Activated B cell treated with CpG ODN at 0.5 μM for 24 hours (primary cell): ENCODE measurements at regions of chr19 and their contacts with region 1.

Region 1: DNA sequence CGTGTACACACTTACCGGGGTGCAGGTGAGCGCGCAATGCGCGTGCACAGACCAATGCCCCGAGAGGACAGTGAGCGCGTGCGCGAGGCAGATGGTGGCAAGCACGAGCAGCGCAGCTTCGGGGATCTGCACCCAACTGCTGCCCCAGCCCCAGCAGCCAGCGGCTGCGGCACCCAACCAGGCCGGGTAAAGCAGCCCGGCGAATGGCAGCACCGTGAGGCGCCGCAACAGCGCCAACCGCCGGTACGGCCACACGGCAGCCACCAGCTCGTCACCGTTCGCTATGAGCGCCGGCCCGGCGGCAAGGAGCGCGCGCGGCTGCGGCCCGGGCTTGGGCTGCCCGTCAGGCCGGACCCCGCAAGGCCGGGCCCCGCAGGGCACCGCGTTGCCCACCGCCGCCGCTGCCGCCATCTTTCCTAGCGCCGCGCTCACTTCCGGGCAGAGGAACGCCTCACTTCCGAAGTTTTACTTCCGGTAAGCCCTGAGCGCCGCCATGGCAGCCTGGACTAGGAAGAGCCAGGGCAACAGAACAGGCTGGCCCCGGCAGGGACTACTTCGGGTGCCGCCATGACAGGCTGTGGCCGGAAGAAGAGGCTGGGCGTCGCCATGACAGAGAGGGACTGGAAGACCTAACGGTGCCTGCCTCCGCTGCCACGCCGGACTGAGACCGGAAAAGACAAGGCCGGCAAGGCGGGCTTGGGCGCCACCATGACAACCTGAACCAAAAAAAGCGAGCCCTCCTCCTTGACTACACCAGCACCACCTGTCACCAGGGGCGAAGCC is at the start of gene ATP13A1:
- DNase-seq: peak; percentile 90
- ATAC-seq: peak; percentile 78
- H3K4me3 Mint-ChIP-seq: peak within 1 kb of the TSS; percentile 92
- H3K27ac Mint-ChIP-seq: peak within 1 kb of the TSS; percentile 98
- H3K4me1 Mint-ChIP-seq: peaks cover 44% of the 10 kb centered on the region
- H3K27me3 Mint-ChIP-seq: no peaks in the 10 kb centered on the region
- CTCF ChIP-seq: no peak
- total RNA-seq, gene ATP13A1: 125 and 135 TPM in 2 replicates

Region 2: GRCh38 chr19:19385108-19385899 is 278.1 kb before region 1 on chr19:
- CTCF ChIA-PET with region 1: no interaction called
- POLR2A ChIA-PET with region 1: no interaction called
- intact Hi-C with region 1: loop called (anchors 1 kb)
- DNase-seq: peak; percentile 98
- ATAC-seq: peak; percentile 89
- H3K4me3 Mint-ChIP-seq: peak overlapping the region; percentile 87
- H3K27ac Mint-ChIP-seq: peak overlapping the region; percentile 83
- H3K4me1 Mint-ChIP-seq: peaks cover 43% of the 10 kb centered on the region
- H3K27me3 Mint-ChIP-seq: no peaks in the 10 kb centered on the region
- CTCF ChIP-seq: no peak

Region 3: DNA sequence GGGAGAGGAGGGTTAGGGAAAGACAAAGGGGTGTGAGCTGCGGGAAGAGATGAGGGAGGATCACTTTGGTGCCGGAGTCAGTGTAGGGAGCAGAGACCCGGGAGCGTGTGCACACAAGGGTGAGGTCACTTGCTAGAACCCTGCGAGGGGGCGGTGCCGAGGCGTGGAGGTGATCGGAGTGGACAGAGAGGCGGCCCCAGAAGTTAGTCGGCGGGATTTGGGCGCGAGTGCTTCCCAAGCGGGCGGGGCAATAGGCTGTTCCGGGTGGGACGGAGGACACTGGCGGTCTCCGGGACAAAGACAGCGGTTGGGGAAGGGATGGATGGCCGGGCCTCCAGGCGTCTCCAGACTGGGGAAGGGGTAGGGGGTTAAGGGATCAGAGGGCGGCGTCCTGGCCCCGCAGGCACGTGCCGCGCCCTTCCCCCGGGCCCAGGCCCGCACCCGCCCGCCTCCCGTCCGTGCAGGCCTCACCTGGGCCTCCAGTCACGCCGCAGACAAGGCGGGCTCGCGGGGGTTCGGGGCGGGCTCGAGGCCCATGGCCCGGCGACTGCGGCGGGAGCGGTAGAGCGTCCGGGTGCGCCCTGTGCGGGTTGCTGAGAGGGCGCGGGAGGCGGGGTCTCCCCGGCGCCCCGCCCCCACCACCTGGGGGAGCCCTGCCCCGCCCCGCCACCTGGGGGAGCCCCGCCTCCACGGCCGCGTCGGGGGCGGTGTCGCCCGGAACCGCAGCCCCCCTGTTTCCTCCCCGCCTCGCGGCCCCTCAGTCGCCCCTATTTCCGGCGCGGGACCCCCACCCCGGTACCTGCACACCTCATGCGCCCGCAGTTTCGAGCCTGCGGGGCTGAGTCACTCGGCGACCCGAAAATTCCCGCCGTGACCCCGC is 35.6 kb before region 1 on chr19 and contains the start of gene LPAR2:
- CTCF ChIA-PET with region 1: no interaction called
- POLR2A ChIA-PET with region 1: interaction called, 10 read pairs
- intact Hi-C with region 1: no loop called
- DNase-seq: peak; percentile 81
- ATAC-seq: peak; percentile 87
- H3K4me3 Mint-ChIP-seq: peak within 1 kb of the TSS; percentile 93
- H3K27ac Mint-ChIP-seq: peak within 1 kb of the TSS; percentile 92
- H3K4me1 Mint-ChIP-seq: peaks cover 24% of the 10 kb centered on the region
- H3K27me3 Mint-ChIP-seq: no peaks in the 10 kb centered on the region
- CTCF ChIP-seq: no peak
- total RNA-seq, gene LPAR2: 29.0 and 33.7 TPM in 2 replicates

Region 4: GRCh38 chr19:19732579-19733501 is 69.4 kb after region 1 on chr19 and contains the start of gene ZNF14:
- CTCF ChIA-PET with region 1: no interaction called
- POLR2A ChIA-PET with region 1: interaction called, 42 read pairs
- intact Hi-C with region 1: loop called (anchors 1 kb)
- DNase-seq: peak; percentile 79
- ATAC-seq: peak; percentile 99
- H3K4me3 Mint-ChIP-seq: peak within 1 kb of the TSS; percentile 99
- H3K27ac Mint-ChIP-seq: peak within 1 kb of the TSS; percentile 96
- H3K4me1 Mint-ChIP-seq: peaks cover 28% of the 10 kb centered on the region
- H3K27me3 Mint-ChIP-seq: no peaks in the 10 kb centered on the region
- CTCF ChIP-seq: no peak
- total RNA-seq, gene ZNF14: 11.8 and 13.4 TPM in 2 replicates

Region 5: DNA sequence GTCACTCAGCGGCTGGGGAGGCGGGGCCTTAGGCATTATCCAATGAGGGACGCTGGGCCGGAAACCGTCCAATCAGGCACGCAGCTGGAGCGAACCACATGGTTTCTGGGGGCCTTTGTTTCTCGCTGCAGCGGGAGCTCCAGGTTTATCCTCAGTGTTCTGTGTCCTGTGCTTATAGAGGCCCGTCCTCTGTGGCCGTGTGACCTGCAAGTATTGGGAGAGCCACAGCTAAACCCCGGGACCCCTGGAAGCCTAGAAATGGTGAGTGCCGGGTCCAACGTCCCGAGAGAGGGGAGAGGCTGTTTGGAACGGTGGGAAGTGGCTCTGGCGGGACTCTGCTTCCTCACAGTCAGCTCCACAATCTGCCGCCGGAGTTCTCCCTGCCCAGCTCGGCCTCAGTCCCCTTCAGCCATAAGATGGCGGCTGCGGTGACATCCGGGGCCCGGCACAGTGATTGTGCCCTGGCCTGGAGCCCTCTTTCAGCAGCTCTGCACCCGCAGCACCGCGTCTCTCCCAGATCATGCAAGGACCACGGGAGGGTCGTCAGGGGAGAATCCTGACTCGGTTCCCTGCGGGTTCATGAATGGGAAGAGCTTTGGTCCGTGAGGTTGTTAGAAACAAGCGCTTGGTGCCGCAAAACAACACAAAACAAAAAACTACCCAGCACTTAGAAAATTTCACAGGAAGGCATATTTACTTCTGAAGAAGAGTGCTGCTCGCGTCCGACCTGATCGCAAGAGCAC is 202.5 kb after region 1 on chr19 and contains the start of gene ZNF253:
- CTCF ChIA-PET with region 1: no interaction called
- POLR2A ChIA-PET with region 1: interaction called, 24 read pairs
- intact Hi-C with region 1: loop called (anchors 1 kb)
- DNase-seq: peak; percentile 82
- ATAC-seq: peak; percentile 90
- H3K4me3 Mint-ChIP-seq: peak within 1 kb of the TSS; percentile 100
- H3K27ac Mint-ChIP-seq: peak within 1 kb of the TSS; percentile 99
- H3K4me1 Mint-ChIP-seq: peaks cover 34% of the 10 kb centered on the region
- H3K27me3 Mint-ChIP-seq: no peaks in the 10 kb centered on the region
- CTCF ChIP-seq: no peak
- total RNA-seq, gene ZNF253: 24.7 and 26.3 TPM in 2 replicates

Region 6: DNA sequence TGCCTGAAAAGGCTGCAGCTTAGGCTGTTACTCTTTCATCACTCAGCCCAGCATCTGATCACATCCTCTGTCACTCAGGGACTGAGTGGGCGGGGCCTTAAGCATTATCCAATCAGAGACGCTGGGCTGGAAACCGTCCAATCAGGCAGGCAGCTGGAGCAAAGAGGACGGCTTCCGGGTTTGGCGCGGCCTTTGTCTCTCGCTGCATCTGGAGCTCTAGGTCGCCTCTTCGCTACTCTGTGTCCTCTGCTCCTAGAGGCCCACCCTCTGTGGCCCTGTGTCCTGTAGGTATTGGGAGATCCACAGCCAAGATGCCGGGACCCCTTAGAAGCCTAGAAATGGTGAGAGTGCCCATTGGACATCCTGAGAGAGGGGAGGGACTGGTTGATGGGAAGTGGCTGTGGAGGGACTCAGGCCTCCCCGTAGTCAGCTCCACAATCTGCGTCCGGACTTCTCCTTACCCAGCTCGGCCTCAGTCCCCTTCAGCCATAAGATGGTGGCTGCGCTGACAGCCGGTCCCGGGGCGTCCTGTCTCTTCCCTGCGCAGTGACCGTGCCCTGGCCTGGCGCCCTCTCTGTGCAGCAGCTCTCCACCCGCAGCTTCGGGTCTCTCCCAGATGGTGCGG is 503.7 kb after region 1 on chr19 and contains the start of gene ZNF486:
- CTCF ChIA-PET with region 1: no interaction called
- POLR2A ChIA-PET with region 1: interaction called, 3 read pairs
- intact Hi-C with region 1: loop called (anchors 2 kb)
- DNase-seq: peak; percentile 80
- ATAC-seq: peak; percentile 96
- H3K4me3 Mint-ChIP-seq: peak within 1 kb of the TSS; percentile 99
- H3K27ac Mint-ChIP-seq: peak within 1 kb of the TSS; percentile 97
- H3K4me1 Mint-ChIP-seq: peaks cover 59% of the 10 kb centered on the region
- H3K27me3 Mint-ChIP-seq: no peaks in the 10 kb centered on the region
- CTCF ChIP-seq: no peak
- total RNA-seq, gene ZNF486: 13.5 and 16.2 TPM in 2 replicates